ENCODE measurements at regions of chr10 and their contacts with region 1.

Region 1: DNA sequence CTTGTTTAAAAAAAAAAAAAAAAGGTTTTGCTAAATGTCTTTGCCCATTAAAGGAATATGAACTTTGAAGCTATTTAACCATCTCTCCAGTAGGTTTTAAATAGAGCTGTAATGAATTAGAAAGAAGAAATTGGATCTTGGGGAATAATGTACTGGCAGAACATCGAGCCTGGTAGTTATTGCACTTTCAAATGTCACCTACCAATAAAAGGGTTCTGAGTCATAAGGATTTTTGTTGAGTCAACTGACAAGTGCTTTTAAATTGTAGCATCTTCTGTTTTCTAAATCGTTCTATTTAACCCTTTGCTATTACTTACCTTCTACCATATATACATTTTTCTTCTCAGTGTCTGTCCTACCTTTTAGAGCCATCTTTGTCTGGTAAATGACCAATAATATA is 10.7 kb downstream of the CUTC start:
- DNase-seq: no peak
- ATAC-seq: no peak
- H3K4me3 ChIP-seq: no peak overlapping the region
- H3K27ac ChIP-seq: no peak overlapping the region
- H3K4me1 ChIP-seq: no peaks in the 10 kb centered on the region
- H3K27me3 ChIP-seq: no peaks in the 10 kb centered on the region
- CTCF ChIP-seq: no peak
- EP300 ChIP-seq: no peak
- POLR2A ChIP-seq: no peak
- RAD21 ChIP-seq: no peak

Region 2: DNA sequence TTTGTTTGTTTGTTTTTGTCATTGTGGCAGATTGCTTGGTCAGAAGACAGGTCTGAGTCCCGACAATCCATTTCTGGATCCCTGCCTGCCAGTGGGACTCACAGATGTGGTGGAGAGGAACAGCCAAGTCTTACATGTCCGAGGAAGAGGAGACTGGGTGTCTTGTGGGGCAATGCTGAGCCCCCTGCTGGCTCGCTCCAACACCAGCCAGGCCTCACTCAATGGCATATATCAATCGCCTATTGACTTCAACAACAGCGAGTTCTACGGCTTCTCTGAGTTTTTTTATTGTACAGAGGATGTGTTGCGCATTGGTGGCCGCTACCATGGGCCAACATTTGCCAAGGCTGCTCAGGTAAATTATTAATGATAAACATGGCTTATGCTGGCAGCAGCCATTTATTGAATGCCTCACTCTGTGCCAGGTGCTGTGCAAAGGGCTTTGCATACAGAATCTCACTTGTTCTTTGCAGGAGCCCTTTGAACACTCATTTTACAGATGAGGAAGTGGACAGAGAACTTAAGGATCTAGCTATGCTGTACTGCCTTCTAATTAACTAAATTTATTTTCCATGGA is 44.1 kb before region 1 on chr10:
- CTCF ChIA-PET with region 1: no interaction called
- POLR2A ChIA-PET with region 1: no interaction called
- RAD21 ChIA-PET with region 1: no interaction called
- SMC1A ChIA-PET with region 1: no interaction called
- in situ Hi-C with region 1: no loop called
- intact Hi-C with region 1: no loop called
- DNase-seq: no peak
- ATAC-seq: no peak
- H3K4me3 ChIP-seq: no peak overlapping the region
- H3K27ac ChIP-seq: no peak overlapping the region
- H3K4me1 ChIP-seq: no peaks in the 10 kb centered on the region
- H3K27me3 ChIP-seq: no peaks in the 10 kb centered on the region
- CTCF ChIP-seq: peak in 1 of 3 experiments; percentile 21; a peak in 3 of 6 replicates
- EP300 ChIP-seq: no peak
- POLR2A ChIP-seq: no peak
- RAD21 ChIP-seq: no peak

Region 3: DNA sequence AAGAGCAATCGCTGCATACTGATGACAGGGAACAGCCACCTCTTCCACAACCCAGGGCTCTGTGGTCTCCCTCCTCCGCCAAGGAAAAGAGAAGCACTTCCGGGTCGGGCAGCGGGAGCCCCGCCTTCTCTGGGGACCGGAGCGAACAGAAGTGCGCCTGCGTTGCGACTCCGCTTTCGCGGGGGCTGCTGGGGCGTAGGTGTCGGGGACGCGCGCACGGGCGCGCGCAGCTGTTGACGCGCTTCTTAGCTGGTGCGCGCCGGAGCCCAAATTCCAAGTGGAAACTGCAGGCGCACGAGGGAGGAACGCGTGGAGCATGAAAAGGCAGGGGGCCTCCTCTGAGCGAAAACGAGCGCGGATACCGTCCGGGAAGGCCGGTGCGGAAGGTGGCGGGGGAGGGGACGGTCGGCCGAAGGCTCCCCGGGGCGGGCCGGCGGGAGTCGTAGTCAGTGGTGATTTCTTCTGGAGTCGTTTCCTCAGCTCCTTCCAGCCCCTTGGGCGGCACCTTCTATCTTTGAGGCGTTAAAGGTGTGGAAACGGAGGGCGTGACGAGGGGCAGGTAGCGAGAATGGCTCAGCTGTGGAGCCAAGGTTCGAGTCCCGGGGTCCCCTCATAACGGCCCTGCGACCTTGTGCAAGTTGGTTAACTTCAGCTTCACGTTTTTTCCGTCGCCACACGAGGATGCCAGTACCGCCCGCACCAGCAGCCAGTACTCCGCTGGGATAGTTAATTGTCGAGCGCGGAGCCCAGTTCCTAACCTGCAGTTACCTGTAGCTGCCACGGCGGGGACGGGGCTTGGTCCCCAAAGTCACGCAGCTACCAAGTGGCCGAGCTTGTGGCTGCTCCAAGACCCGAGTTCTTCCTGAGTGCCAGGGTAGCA is 10.4 kb before region 1 on chr10 and contains the starts of genes COX15 and CUTC:
- CTCF ChIA-PET with region 1: interaction called, 10 read pairs
- POLR2A ChIA-PET with region 1: interaction called, 9 read pairs
- RAD21 ChIA-PET with region 1: interaction called, 5 read pairs
- SMC1A ChIA-PET with region 1: interaction called, 11 read pairs
- in situ Hi-C with region 1: no loop called
- intact Hi-C with region 1: no loop called
- DNase-seq: peak; percentile 82
- ATAC-seq: peak; percentile 95
- H3K4me3 ChIP-seq: peak within 1 kb of the TSS; percentile 98
- H3K27ac ChIP-seq: peak within 1 kb of the TSS; percentile 89
- H3K4me1 ChIP-seq: peaks cover 5% of the 10 kb centered on the region; the same call in 1 of the 2 replicates
- H3K27me3 ChIP-seq: no peaks in the 10 kb centered on the region
- CTCF ChIP-seq: peak; percentile 25 to 57 (median 48); a peak in 5 of 6 replicates
- EP300 ChIP-seq: no peak
- POLR2A ChIP-seq: peak; percentile 94
- RAD21 ChIP-seq: 0 out of 2 replicates have a peak, but pooled peaks have one; percentile 1
- polyA plus RNA-seq, gene COX15: 46.3 to 50.7 TPM
- polyA plus RNA-seq, gene CUTC: 64.6 to 71.7 TPM

Region 4: DNA sequence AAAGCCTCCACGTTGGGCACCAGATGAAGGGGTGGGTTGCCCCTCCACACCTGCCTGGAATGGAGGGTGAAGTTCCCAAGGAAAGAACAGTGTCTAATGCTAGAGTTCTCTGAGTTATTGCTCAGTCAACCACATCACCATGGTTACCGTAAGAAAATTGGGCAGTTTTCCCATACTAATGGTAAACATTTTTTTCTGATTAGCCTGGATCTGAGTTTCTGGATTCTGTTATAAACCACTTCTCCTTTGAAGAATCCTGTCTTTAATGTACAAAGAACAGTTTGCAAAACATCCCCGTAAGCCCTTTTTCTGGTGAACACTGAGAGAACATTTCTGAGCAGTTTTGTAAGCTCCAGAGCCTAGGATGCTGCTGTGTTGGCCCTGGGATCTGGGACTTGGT is 85.2 kb after region 1 on chr10:
- CTCF ChIA-PET with region 1: no interaction called
- POLR2A ChIA-PET with region 1: no interaction called
- RAD21 ChIA-PET with region 1: no interaction called
- SMC1A ChIA-PET with region 1: no interaction called
- in situ Hi-C with region 1: no loop called
- intact Hi-C with region 1: no loop called
- DNase-seq: no peak
- ATAC-seq: no peak
- H3K4me3 ChIP-seq: no peak overlapping the region
- H3K27ac ChIP-seq: no peak overlapping the region
- H3K4me1 ChIP-seq: no peaks in the 10 kb centered on the region
- H3K27me3 ChIP-seq: no peaks in the 10 kb centered on the region
- CTCF ChIP-seq: no peak
- EP300 ChIP-seq: no peak
- POLR2A ChIP-seq: no peak
- RAD21 ChIP-seq: no peak